AG04449 (cell line): ENCODE measurements at regions of chr18 and their contacts with region 1.

Region 1: DNA sequence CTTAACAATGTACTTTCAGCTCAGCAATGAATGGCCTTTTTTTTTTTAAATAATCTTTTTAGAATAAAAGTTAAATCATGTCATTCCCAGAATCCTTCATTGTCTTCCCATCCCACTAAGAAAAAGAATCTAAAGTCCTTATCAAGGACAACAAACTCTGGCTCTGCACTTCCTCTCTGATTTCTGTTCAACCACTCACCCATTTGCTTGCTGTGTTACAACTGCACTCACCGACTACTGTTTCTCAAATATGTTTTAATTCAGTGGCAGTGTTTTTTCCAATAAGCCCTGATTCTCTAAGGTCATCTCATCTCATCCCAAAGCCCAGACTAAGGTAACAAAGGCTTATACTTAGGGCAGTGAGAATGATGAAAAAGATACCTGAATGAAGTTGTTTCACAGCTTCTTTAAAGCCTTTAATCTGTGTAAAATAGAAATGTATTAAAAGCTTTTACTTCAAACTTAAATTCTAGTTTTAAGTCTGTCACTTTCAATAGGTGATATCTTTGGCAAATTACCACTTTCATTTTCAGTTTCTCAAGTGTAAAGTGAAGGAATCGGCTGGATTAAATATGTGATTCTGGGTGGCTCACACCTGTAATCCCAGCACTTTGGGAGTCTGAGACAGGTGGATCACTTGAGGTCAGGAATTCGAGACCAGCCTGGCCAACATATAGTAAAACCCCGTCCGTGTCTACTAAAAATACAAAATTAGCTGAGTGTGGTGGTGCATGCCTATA is 87.6 kb downstream of the RBBP8 start:
- DNase-seq: no peak
- H3K4me3 ChIP-seq: no peak overlapping the region
- CTCF ChIP-seq: no peak

Region 2: GRCh38 chr18:22667616-22668422 is 352.9 kb before region 1 on chr18:
- CTCF ChIA-PET with region 1: no interaction called
- POLR2A ChIA-PET with region 1: no interaction called
- DNase-seq: peak; percentile 84
- H3K4me3 ChIP-seq: no peak overlapping the region
- CTCF ChIP-seq: no peak

Region 3: GRCh38 chr18:23416298-23416697 is 395.6 kb after region 1 on chr18:
- CTCF ChIA-PET with region 1: interaction called, 10 read pairs
- POLR2A ChIA-PET with region 1: no interaction called
- DNase-seq: no peak
- H3K4me3 ChIP-seq: no peak overlapping the region
- CTCF ChIP-seq: no peak